PC-9 (cell line): ENCODE measurements at regions of chr5 and their contacts with region 1.

Region 1: GRCh38 chr5:38598994-38599611 is 42.7 kb upstream of the LIFR start:
- DNase-seq: peak; percentile 60 to 80
- H3K4me3 ChIP-seq: no peak overlapping the region
- H3K27ac ChIP-seq: peak overlapping the region; percentile 38
- H3K4me1 ChIP-seq: peaks cover 76% of the 10 kb centered on the region
- H3K27me3 ChIP-seq: no peaks in the 10 kb centered on the region
- CTCF ChIP-seq: no peak

Region 2: DNA sequence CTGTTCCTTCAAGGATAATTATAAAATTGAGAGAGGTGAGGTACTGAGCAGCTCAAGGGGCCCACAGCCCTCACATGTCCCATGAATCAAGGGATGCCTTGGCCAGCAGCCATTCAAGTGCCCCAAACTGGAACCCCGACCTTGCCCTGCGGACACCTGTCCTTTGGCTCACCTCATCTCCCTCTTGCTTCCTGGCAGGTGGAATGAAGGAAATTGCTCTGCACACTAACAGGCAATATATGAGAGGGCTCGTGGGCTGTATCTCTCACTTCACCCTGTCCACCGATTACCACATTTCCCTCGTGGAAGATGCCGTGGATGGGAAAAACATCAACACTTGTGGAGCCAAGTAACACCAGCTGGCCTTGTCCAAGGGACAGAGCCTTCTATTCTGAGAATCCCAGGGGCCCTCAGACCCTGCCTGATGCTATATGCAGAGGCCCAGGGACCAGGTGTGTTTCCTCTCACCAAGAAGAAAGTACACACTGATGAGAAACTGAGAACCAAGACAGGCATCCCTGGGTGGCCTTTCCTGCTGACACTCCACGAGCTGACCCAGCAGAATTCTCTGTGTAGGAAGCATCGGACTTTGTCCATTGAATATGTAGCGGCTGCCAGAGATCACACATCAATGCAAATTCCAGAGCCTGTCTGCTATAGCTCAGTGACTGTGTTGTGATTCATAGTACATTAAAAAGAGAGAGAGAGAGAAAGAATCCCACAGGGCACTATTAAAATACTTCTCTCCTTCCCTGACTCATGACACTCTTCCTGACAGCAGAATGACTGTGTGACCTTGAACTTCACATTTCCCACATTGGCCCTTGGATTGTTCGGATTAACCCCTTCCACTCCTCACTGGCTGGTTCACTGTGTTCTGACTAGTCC is 135.2 kb before region 1 on chr5:
- CTCF ChIA-PET with region 1: no interaction called
- POLR2A ChIA-PET with region 1: no interaction called
- intact Hi-C with region 1: loop called (anchors 5 kb)
- DNase-seq: peak in 1 of 2 experiments; percentile 45
- H3K4me3 ChIP-seq: no peak overlapping the region
- H3K27ac ChIP-seq: no peak overlapping the region
- H3K4me1 ChIP-seq: peaks cover 14% of the 10 kb centered on the region
- H3K27me3 ChIP-seq: no peaks in the 10 kb centered on the region
- CTCF ChIP-seq: no peak

Region 3: DNA sequence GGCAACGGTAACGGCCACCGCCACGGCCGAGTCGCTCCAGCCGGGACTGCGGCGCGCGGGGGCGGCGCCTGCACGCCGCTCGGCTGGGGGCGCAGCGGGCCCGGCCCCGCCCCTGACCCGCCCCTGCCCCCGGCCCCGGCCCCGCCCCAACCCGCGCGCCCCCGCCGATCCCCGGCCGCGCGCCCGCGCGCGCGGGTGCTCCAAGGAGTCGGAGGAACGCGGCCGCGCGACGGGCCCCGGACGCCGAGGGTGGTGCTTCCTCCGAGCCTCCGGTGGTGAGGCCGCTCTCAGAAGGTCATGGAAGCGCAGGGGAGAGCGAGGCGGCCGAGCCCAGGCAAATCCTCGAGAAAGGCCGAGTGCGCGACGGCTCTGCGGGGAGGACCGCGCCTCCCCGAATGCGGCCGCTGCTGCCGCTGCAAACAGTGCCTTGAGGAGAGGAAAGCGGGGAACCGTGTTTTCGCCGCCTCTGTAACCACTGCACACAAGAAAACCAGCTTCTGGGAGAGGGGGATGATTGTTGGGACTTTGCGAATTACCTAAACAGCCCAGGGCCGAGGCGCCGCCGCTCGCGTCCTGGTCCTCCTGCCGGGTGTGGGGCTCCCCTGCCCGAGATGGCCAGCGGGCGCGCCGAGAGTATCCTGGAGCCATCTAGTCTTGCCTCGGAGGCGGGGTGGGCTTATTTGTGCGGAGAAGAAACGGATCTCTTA is 42.4 kb before region 1 on chr5 and contains the start of gene LIFR:
- CTCF ChIA-PET with region 1: no interaction called
- POLR2A ChIA-PET with region 1: no interaction called
- intact Hi-C with region 1: loop called (anchors 1 kb)
- DNase-seq: peak; percentile 53 to 95
- H3K4me3 ChIP-seq: peak within 1 kb of the TSS; percentile 97
- H3K27ac ChIP-seq: peak within 1 kb of the TSS; percentile 58
- H3K4me1 ChIP-seq: peaks cover 10% of the 10 kb centered on the region; the same call in 1 of the 2 replicates
- H3K27me3 ChIP-seq: 0 out of 2 replicates have a peak, but pooled peaks cover 15% of the 10 kb centered on the region
- CTCF ChIP-seq: no peak
- total RNA-seq, gene LIFR: 22.0 and 28.6 TPM in 2 replicates

Region 4: GRCh38 chr5:38660194-38660668 is 61.1 kb after region 1 on chr5:
- CTCF ChIA-PET with region 1: interaction called, 5 read pairs
- POLR2A ChIA-PET with region 1: interaction called, 4 read pairs
- intact Hi-C with region 1: loop called (anchors 1 kb)
- DNase-seq: peak; percentile 82 to 88
- H3K4me3 ChIP-seq: peak overlapping the region; percentile 57; the same call in 1 of the 2 replicates
- H3K27ac ChIP-seq: peak overlapping the region; percentile 40
- H3K4me1 ChIP-seq: no peaks in the 10 kb centered on the region
- H3K27me3 ChIP-seq: no peaks in the 10 kb centered on the region
- CTCF ChIP-seq: no peak

Region 5: DNA sequence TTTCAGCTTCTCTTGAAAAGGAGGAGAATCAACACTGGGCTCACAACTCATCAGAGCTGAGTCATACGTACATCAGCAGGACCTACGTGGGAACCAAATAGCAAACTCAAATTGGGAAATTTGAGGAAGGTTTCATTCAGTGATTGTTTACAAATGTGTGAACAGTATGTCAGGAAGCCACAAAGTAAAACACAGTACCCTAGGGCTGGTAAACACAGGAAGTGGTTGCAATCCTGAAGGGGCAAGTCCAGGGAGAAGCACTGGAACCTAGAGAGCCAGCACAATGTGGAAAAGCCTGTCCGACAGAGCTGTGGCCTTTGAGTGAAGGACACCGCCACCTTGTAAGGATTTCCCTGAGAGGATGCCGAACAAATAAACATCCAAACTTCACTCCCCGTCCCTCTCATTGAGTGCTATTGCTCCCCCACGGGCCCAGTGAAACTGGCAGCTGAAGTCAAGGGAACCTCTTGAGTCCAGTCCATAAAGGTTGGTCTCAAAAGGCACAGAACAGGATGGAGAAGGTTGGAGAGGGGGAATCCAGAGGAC is 501.8 kb after region 1 on chr5:
- CTCF ChIA-PET with region 1: no interaction called
- POLR2A ChIA-PET with region 1: interaction called, 7 read pairs
- intact Hi-C with region 1: loop called (anchors 5 kb)
- DNase-seq: peak; percentile 96 to 100
- H3K4me3 ChIP-seq: peak overlapping the region; percentile 41; the same call in 1 of the 2 replicates
- H3K27ac ChIP-seq: peak overlapping the region; percentile 98
- H3K4me1 ChIP-seq: peaks cover 60% of the 10 kb centered on the region
- H3K27me3 ChIP-seq: no peaks in the 10 kb centered on the region
- CTCF ChIP-seq: no peak